Caco-2 (cell line): ENCODE measurements at regions of chr10 and their contacts with region 1.

Region 1: GRCh38 chr10:5094265-5095205 is at the start of gene AKR1C3:
- DNase-seq: peak in 1 of 2 experiments; percentile 57
- H3K4me3 ChIP-seq: peak within 1 kb of the TSS; percentile 47
- H3K4me3 Mint-ChIP-seq: peak within 1 kb of the TSS; percentile 73
- H3K27ac Mint-ChIP-seq: peak within 1 kb of the TSS; percentile 67
- H3K4me1 ChIP-seq: peaks cover 9% of the 10 kb centered on the region
- H3K4me1 Mint-ChIP-seq: peaks cover 6% of the 10 kb centered on the region
- H3K27me3 ChIP-seq: no peaks in the 10 kb centered on the region
- H3K27me3 Mint-ChIP-seq: no peaks in the 10 kb centered on the region
- CTCF ChIP-seq: peak; percentile 70 to 80
- total RNA-seq, gene AKR1C3: 96.8 and 115 TPM in 2 replicates

Region 2: DNA sequence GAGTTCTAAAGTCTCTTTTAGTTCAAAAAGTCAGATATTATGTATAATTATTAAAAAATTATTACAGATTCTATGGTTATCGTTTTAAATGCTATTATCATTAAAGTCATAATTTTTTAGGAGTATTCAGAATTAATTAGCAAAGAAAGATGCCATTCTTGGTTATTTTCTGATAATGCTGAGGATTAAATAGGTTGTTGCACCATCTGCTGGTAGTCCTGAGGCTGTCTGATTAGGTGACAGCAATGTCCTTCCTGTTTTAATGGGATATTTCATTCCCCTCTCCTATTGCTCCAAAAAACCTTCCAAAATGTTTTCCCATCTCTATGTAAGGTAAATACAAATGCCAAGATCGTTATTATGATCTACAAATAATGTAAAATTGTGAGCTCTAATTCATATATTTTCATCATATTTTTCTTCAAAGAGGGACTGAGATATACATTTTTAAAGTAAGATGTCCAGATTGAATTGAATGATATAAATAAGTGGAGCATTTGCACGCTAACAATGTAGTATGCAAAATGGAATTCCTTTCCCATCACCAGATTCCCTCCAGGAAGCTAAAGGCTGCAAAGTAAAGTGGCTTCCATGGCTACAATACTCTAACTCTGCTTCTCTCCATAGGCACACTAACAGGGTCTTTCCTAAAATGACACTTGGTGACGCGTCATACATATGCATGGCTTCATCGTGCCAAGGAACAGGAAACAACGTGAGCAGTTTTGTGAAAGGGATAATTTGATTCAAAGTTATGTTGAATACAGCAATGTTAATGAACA is 327.3 kb before region 1 on chr10:
- CTCF ChIA-PET with region 1: no interaction called
- POLR2A ChIA-PET with region 1: no interaction called
- intact Hi-C with region 1: no loop called
- DNase-seq: peak in 1 of 2 experiments; percentile 18
- H3K4me3 ChIP-seq: no peak overlapping the region
- H3K4me3 Mint-ChIP-seq: no peak overlapping the region
- H3K27ac Mint-ChIP-seq: no peak overlapping the region
- H3K4me1 ChIP-seq: no peaks in the 10 kb centered on the region
- H3K4me1 Mint-ChIP-seq: no peaks in the 10 kb centered on the region
- H3K27me3 ChIP-seq: no peaks in the 10 kb centered on the region
- H3K27me3 Mint-ChIP-seq: peaks cover 8% of the 10 kb centered on the region
- CTCF ChIP-seq: peak; percentile 69 to 74

Region 3: DNA sequence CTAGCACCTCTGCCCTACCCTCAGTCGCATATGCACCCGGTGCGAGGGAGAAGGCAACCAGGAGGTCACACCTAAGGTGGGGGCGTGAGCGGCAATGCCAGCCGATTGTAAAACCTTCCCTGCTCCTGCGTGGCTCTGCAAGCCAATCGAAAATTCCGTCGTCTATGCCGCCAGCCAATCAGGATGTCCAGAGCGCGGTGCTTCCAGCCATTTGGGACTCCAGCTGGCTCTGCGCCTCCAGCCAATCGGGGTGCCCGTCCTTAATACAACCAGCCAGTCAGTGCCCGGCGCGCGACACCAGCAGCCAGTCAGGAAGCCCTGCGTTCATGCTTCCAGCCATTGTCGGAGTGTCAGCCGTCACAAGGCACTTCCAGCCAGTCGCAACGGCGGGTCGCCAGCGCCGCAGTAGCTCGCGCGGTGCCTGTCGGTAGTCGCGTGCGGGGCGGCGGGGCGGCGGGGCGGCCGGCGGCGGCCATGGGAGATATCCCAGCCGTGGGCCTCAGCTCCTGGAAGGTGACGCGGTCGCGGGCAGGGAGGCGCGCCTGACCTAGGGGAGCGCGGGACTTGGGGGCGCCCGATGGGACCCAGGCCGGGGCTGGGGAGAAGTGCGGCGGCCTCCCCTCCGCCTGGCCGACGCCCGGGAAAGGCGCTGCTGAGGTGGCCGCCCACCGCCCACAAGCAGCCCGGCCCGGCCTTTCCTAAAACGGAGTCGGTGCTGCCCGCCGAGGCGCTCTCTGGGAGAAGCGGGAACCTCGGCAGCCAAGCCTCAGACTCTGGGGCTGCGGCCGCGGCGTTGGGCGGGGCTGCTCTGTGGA is 268.5 kb before region 1 on chr10 and contains the start of gene AKR1E2:
- CTCF ChIA-PET with region 1: no interaction called
- POLR2A ChIA-PET with region 1: no interaction called
- intact Hi-C with region 1: no loop called
- DNase-seq: peak; percentile 100
- H3K4me3 ChIP-seq: peak within 1 kb of the TSS; percentile 56
- H3K4me3 Mint-ChIP-seq: peak within 1 kb of the TSS; percentile 98
- H3K27ac Mint-ChIP-seq: peak within 1 kb of the TSS; percentile 94
- H3K4me1 ChIP-seq: peaks cover 19% of the 10 kb centered on the region
- H3K4me1 Mint-ChIP-seq: peaks cover 12% of the 10 kb centered on the region
- H3K27me3 ChIP-seq: no peaks in the 10 kb centered on the region
- H3K27me3 Mint-ChIP-seq: peaks cover 5% of the 10 kb centered on the region
- CTCF ChIP-seq: no peak
- total RNA-seq, gene AKR1E2: 68.3 and 68.5 TPM in 2 replicates

Region 4: GRCh38 chr10:4839401-4839800 is 255.1 kb before region 1 on chr10:
- CTCF ChIA-PET with region 1: no interaction called
- POLR2A ChIA-PET with region 1: no interaction called
- intact Hi-C with region 1: no loop called
- DNase-seq: peak in 1 of 2 experiments; percentile 34
- H3K4me3 ChIP-seq: no peak overlapping the region
- H3K4me3 Mint-ChIP-seq: no peak overlapping the region
- H3K27ac Mint-ChIP-seq: no peak overlapping the region
- H3K4me1 ChIP-seq: no peaks in the 10 kb centered on the region
- H3K4me1 Mint-ChIP-seq: no peaks in the 10 kb centered on the region
- H3K27me3 ChIP-seq: no peaks in the 10 kb centered on the region
- H3K27me3 Mint-ChIP-seq: no peaks in the 10 kb centered on the region
- CTCF ChIP-seq: peak in 1 of 2 experiments; percentile 45

Region 5: DNA sequence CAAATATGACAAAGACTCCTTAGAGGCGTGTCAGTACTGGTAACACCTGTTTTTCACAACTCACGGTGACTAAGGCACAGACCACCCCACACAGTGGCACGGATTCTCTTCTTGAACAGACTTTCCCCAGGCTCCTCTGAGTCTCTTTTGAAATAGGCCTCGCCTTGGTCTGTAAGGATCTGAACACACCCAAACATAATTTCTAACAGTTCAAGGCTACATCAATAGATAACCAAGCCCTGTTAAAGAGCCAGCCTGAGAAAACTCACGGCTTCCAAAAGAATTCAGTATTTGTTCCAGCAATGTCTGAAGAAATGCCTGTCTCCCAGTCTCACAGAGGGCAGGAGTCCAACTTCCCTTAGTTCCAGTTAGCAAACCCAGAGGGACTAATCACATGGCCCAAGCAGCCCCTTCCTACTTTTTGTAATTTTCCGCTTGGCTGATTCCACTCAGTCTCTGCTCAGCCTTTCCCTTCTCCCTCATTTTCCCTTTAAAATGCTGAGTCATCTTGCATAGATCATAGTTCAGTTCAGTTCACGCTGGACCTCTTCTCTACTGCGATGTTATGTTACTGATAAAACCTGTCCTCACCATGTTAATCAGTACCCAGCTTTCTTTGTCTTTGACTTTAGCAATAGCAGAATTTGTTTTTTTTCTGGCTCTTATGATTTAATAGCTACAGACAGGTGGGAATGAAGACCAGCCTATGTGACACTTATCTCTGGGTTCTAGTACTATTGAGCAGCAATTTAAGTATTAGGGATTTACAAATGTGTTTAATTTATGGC is 22.9 kb before region 1 on chr10:
- CTCF ChIA-PET with region 1: interaction called, 3 read pairs
- POLR2A ChIA-PET with region 1: no interaction called
- intact Hi-C with region 1: loop called (anchors 1 kb)
- DNase-seq: peak; percentile 95 to 96
- H3K4me3 ChIP-seq: peak overlapping the region; percentile 2; the same call in 1 of the 2 replicates
- H3K4me3 Mint-ChIP-seq: peak overlapping the region; percentile 56
- H3K27ac Mint-ChIP-seq: peak overlapping the region; percentile 85
- H3K4me1 ChIP-seq: peaks cover 64% of the 10 kb centered on the region
- H3K4me1 Mint-ChIP-seq: peaks cover 52% of the 10 kb centered on the region
- H3K27me3 ChIP-seq: no peaks in the 10 kb centered on the region
- H3K27me3 Mint-ChIP-seq: no peaks in the 10 kb centered on the region
- CTCF ChIP-seq: no peak

Region 6: DNA sequence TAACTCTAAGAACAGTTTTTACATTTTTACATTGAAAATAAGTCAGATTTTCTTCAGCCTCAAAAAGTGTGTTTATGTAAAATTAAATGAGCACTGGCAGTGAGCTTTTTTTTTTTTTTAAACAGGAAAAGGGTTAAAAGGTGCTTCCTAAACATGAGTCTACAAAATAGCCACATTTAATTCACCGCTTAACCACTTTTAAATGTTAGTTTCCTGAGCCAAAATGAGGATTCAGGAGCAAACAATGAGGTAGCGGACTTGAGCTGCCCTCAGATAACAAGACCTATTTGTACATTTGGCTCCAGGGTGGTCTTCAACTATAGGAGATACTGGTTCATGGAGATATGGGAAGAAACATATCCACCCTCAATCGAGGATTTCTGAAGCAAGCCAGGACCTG is 22.5 kb after region 1 on chr10:
- CTCF ChIA-PET with region 1: no interaction called
- POLR2A ChIA-PET with region 1: no interaction called
- intact Hi-C with region 1: no loop called
- DNase-seq: no peak
- H3K4me3 ChIP-seq: no peak overlapping the region
- H3K4me3 Mint-ChIP-seq: no peak overlapping the region
- H3K27ac Mint-ChIP-seq: no peak overlapping the region
- H3K4me1 ChIP-seq: 0 out of 2 replicates have a peak, but pooled peaks cover 3% of the 10 kb centered on the region
- H3K4me1 Mint-ChIP-seq: no peaks in the 10 kb centered on the region
- H3K27me3 ChIP-seq: no peaks in the 10 kb centered on the region
- H3K27me3 Mint-ChIP-seq: no peaks in the 10 kb centered on the region
- CTCF ChIP-seq: no peak

Region 7: GRCh38 chr10:5147255-5147980 is 52.9 kb after region 1 on chr10:
- CTCF ChIA-PET with region 1: no interaction called
- POLR2A ChIA-PET with region 1: no interaction called
- intact Hi-C with region 1: loop called (anchors 1 kb)
- DNase-seq: peak; percentile 84 to 85
- H3K4me3 ChIP-seq: no peak overlapping the region
- H3K4me3 Mint-ChIP-seq: peak overlapping the region; percentile 53
- H3K27ac Mint-ChIP-seq: peak overlapping the region; percentile 91
- H3K4me1 ChIP-seq: peaks cover 43% of the 10 kb centered on the region
- H3K4me1 Mint-ChIP-seq: peaks cover 34% of the 10 kb centered on the region
- H3K27me3 ChIP-seq: no peaks in the 10 kb centered on the region
- H3K27me3 Mint-ChIP-seq: no peaks in the 10 kb centered on the region
- CTCF ChIP-seq: no peak

Region 8: GRCh38 chr10:5265139-5265538 is 170.6 kb after region 1 on chr10:
- CTCF ChIA-PET with region 1: no interaction called
- POLR2A ChIA-PET with region 1: no interaction called
- intact Hi-C with region 1: loop called (anchors 5 kb)
- DNase-seq: no peak
- H3K4me3 ChIP-seq: no peak overlapping the region
- H3K4me3 Mint-ChIP-seq: no peak overlapping the region
- H3K27ac Mint-ChIP-seq: no peak overlapping the region
- H3K4me1 ChIP-seq: peaks cover 9% of the 10 kb centered on the region; the same call in 1 of the 2 replicates
- H3K4me1 Mint-ChIP-seq: no peaks in the 10 kb centered on the region
- H3K27me3 ChIP-seq: no peaks in the 10 kb centered on the region
- H3K27me3 Mint-ChIP-seq: no peaks in the 10 kb centered on the region
- CTCF ChIP-seq: no peak

Region 9: GRCh38 chr10:5434017-5434753 is 339.6 kb after region 1 on chr10:
- CTCF ChIA-PET with region 1: interaction called, 3 read pairs
- POLR2A ChIA-PET with region 1: no interaction called
- intact Hi-C with region 1: loop called (anchors 5 kb)
- DNase-seq: peak in 1 of 2 experiments; percentile 66
- H3K4me3 ChIP-seq: no peak overlapping the region
- H3K4me3 Mint-ChIP-seq: no peak overlapping the region
- H3K27ac Mint-ChIP-seq: no peak overlapping the region
- H3K4me1 ChIP-seq: no peaks in the 10 kb centered on the region
- H3K4me1 Mint-ChIP-seq: peaks cover 17% of the 10 kb centered on the region
- H3K27me3 ChIP-seq: no peaks in the 10 kb centered on the region
- H3K27me3 Mint-ChIP-seq: no peaks in the 10 kb centered on the region
- CTCF ChIP-seq: peak; percentile 81 to 86